Aorta (tissue), 5 donors: ENCODE measurements at regions of chr14 and their contacts with region 1.

Region 1: DNA sequence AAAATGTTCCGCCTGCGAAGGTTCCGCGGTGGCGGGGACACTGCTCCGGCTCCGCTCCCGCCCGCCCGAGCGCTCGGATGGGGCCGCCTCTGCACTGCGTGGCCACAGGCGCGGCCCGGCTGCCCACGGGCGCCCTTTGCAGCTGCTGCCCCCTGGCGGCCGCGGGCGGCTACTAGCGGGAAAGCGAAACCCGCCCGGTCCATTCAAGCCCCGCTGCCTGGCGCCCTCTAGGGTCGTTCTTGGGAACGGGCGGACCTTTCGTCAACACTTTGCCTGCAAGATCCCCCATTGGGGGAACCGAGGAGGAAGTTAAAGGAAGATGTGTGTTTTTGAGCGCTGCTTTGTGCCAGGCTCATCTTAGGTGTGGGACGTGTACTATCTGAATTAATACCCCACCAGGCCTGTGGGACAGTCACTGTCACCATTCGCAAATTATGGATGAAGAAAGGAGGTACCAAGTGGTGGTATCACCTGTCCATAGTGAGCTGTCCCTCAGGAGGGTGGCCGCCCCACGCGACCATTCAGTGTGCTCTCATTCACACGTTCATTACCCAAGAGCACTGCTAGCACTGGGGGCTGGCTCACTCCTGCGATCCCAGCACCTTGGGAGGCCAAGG is 19.4 kb downstream of the GPR132 start:
- DNase-seq: peak; percentile 91 to 97
- ATAC-seq: peak; percentile 97
- H3K4me3 ChIP-seq: no peak overlapping the region
- H3K27ac ChIP-seq: no peak overlapping the region
- H3K4me1 ChIP-seq: no peaks in the 10 kb centered on the region
- H3K27me3 ChIP-seq: no peaks in the 10 kb centered on the region

Region 2: DNA sequence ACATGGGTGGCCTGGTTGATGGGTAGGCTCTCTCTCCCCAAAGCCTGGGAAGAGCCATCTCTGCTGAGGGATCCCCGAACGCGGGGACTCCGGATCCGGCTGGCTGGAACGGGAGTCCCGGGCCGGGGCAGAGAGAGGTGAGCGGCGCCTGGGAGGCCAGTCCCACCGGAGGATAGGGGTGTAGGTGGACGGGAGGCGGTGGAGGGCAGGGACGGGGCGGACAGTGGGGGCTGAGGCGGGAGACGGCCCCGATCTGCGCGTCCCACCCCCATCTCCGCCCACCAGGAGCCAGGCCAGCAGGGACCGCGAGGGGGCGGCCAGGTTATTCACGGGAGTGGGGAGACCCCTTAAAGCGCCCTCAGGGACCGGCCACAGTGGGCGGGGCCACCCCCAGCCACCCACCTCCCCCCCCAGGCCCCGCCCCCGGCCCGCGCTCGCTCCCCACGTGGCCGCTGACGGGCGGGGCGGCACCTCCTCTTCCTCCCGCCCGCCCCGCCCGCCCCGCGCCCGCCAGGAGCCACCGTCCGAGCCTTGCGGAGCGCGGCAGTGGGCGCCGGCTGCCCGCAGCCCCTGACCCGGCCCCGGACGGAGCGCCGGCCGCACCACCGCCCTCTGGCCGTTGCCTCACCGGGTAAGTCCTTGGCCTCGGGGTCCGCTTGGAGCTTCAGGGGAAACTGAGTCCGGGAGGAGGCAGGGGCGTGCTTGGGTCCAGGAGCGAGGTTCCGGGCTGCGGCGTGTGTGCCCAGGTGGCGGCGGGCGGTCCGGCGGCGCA is 356.5 kb before region 1 on chr14 and contains the start of gene INF2:
- intact Hi-C with region 1: no loop called
- DNase-seq: no peak
- ATAC-seq: peak; percentile 72
- H3K4me3 ChIP-seq: peak within 1 kb of the TSS; percentile 60 to 88
- H3K27ac ChIP-seq: peak within 1 kb of the TSS in 1 of 2 donors; percentile 43
- H3K4me1 ChIP-seq: no peaks in the 10 kb centered on the region
- H3K27me3 ChIP-seq: no peaks in the 10 kb centered on the region
- total RNA-seq, gene INF2: 84.9 to 102 TPM

Region 3: GRCh38 chr14:104895786-104896661 is 149.8 kb before region 1 on chr14:
- intact Hi-C with region 1: loop called (anchors 1 to 5 kb)
- DNase-seq: peak; percentile 63 to 82
- ATAC-seq: peak; percentile 20
- H3K4me3 ChIP-seq: no peak overlapping the region
- H3K27ac ChIP-seq: no peak overlapping the region
- H3K4me1 ChIP-seq: no peaks in the 10 kb centered on the region
- H3K27me3 ChIP-seq: no peaks in the 10 kb centered on the region

Region 4: GRCh38 chr14:104932676-104933631 is 112.9 kb before region 1 on chr14:
- intact Hi-C with region 1: loop called (anchors 10 kb)
- DNase-seq: peak; percentile 93 to 98
- ATAC-seq: peak; percentile 91
- H3K4me3 ChIP-seq: peak overlapping the region; percentile 42 to 48
- H3K27ac ChIP-seq: no peak overlapping the region
- H3K4me1 ChIP-seq: no peaks in the 10 kb centered on the region
- H3K27me3 ChIP-seq: no peaks in the 10 kb centered on the region

Region 5: DNA sequence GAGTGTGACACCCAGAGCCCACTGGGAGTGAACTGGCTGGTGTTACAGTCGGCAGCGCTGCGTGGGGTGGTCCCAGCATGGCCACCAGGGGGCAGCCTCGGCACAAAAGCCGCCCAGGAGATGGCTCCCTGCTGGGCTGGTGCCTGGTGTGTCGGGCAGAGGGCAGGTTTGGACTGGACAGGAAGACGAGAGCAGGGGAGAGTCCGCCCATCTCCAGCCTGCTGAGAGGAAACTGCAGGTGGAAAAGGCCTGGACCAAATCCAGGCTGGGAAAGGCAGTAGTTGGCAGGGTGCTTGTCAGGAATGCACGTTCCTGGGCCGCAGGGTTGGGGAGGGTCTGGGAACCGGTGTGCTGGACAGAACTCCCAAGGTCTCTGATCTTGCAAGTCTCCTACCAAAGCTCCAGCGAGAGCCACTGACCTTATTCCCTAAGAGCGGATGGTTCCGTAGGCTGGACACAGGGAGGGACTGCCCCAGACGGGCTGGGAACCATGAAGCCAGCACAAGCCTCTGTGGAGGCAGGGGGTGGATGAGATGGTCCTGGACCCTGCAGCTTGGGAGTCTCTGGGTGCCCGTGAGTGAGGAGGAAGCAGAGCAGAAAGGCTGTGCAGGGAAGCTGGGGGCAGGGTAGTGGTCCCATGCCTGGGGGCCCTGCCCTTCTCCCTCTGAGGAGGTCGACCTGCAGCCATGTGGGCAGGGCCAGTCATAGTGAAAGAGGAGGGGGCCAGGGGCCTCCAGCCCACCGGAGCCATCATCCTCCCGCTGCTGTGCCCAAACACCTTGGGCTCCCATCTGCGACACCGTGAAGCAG is 69.4 kb before region 1 on chr14:
- intact Hi-C with region 1: loop called (anchors 1 to 2 kb)
- DNase-seq: peak; percentile 91 to 94
- ATAC-seq: no peak
- H3K4me3 ChIP-seq: no peak overlapping the region
- H3K27ac ChIP-seq: no peak overlapping the region
- H3K4me1 ChIP-seq: no peaks in the 10 kb centered on the region
- H3K27me3 ChIP-seq: no peaks in the 10 kb centered on the region

Region 6: DNA sequence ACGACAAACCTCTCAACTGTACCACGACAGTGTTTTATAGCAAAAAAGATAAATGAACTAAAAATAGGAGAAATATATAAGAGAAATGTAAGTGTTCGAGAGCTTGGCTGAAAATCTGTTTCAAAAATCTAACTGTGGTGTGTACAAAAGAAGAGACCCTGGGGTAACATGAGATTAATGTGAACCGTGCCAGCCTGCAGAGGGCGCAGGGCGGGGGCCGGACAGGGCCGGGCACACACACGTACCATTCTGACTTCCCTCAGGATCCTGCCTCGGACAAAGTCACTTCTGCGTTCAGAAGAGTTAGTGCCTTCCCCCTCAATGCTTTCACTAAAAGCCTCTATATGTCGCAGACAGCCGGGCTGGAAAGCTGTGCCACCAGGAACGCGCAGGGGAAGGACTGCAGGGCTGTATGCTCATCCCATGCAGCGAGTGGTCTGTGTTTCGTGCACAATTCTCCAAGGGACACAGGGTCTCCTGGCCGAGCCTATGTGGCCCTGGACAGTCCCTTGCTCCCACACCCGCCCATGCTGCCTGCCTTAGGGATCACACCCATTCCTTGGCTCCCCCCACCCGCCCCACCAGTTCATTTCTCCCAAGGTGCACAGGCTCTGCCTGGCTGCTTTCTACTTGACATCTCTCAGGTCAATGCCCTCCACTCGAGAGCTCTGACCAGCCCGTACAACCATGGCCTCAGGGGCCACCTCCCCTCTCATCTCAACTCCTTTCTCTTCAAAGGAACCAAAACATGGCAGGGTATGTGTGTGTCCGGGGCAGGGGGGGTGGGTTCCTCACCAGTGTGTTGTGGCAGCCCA is 33.4 kb before region 1 on chr14:
- intact Hi-C with region 1: loop called (anchors 2 to 5 kb)
- DNase-seq: peak in 1 of 2 donors; percentile 79
- ATAC-seq: peak; percentile 44
- H3K4me3 ChIP-seq: no peak overlapping the region
- H3K27ac ChIP-seq: no peak overlapping the region
- H3K4me1 ChIP-seq: no peaks in the 10 kb centered on the region
- H3K27me3 ChIP-seq: no peaks in the 10 kb centered on the region